Activated naive CD4-positive, alpha-beta T cell treated with anti-CD3 and anti-CD28 coated beads for 36 hours (primary cell): ENCODE measurements at regions of chr20 and their contacts with region 1.

Region 1: DNA sequence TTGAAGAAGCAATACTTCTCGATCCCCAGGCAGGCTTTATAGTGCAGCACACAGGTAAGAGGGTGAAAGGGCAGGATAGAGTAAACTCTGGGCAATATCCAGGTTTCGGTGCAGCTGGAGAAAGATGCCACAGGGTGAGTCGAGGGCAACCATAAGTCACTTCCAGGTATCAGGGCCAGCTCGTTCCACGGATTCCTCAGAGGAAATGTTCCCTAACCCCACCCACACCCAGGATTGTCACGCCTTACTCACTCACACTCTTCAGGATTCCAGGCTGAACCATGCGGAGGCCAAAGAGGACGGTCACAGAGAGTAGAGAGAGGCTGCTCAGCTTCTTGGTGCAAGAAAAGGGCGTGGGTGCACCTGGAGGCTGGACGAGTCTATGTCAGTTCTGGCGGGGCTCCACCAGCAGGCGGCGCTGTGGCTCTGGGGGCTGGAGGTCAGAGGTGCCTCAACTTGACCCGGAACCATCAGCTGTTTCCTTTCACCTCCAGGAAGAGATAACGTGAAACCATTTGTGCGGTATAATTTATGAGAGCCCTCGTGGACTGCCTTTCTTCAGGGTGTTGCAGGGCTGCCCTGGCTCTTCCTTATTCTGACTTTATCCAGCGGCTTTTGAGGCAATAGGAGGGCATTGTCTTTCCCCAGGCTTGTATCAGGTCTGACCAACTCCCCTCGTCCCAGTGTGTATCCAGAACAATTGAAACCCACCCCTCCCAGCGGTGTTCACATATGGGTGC is 14.5 kb upstream of the WFDC12 start:
- DNase-seq: peak; percentile 88
- H3K4me3 Mint-ChIP-seq: no peak overlapping the region
- H3K27ac Mint-ChIP-seq: no peak overlapping the region
- H3K4me1 Mint-ChIP-seq: no peaks in the 10 kb centered on the region
- H3K27me3 Mint-ChIP-seq: peaks cover 7% of the 10 kb centered on the region

Region 2: DNA sequence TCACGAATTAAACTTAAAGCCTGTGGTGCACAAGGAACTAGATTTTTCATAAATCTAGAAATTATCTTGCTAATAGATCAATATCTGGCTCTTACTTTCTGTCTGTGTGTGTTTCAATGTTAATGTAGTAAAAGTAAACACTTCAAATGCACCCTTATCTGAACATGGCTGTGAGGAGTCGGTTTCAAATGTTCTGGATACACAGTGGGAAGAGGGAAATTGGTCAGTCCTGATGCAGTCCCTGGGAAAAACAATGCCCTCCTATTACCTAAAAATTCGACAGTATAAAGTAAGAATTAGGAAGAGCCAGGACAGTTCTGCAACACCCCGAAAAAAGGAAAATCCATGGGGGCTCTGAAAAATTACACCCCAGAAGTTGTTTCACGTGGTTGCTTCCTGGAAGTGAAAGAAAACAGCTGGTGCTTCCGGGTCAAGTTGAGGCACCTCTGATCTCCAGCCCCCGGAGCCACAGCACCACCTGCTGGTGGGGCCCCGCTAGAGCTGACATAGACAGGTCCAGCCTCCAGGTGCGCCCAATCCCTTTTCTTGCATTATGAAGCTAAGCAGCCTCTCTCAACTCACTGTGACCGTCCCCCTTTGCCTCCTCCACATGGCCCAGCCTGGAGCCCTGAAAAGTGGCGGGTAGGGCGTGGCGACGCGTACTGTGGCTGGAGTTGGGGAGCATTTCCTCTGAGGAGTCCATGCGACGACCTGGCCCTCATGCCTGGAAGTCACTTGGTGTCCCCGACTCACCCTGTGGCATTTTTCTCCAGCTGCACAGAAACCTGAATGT is 90.7 kb after region 1 on chr20:
- CTCF ChIA-PET with region 1: interaction called, 5 read pairs
- intact Hi-C with region 1: loop called (anchors 10 kb)
- DNase-seq: peak; percentile 69
- H3K4me3 Mint-ChIP-seq: no peak overlapping the region
- H3K27ac Mint-ChIP-seq: no peak overlapping the region
- H3K4me1 Mint-ChIP-seq: no peaks in the 10 kb centered on the region
- H3K27me3 Mint-ChIP-seq: peaks cover 25% of the 10 kb centered on the region

Region 3: DNA sequence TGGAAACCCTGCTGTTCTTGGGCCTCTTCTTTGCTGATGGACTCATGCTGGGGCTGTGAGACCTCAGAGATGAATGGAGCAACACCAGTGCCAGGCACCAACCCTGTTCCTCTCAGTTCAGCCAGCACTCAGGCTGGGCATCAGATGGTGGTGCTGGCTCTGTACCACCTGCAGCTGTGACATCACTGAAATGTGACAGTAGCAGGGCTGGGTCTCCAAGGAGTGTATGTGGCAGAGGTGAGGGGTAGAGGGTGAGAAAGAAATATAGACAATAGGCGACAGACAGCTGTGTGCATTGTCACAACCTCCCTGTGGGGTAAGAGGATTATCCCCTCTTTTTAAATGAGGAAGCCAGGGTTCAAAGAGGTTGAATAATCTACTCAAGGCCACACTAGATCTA is 239.5 kb after region 1 on chr20 and contains the start of gene TP53TG5:
- CTCF ChIA-PET with region 1: no interaction called
- intact Hi-C with region 1: no loop called
- DNase-seq: no peak
- H3K4me3 Mint-ChIP-seq: no peak within 1 kb of the TSS
- H3K27ac Mint-ChIP-seq: no peak within 1 kb of the TSS
- H3K4me1 Mint-ChIP-seq: peaks cover 13% of the 10 kb centered on the region
- H3K27me3 Mint-ChIP-seq: no peaks in the 10 kb centered on the region
- total RNA-seq, gene TP53TG5: 0.59 to 1.0 TPM

Region 4: GRCh38 chr20:45905505-45906079 is 766.9 kb after region 1 on chr20:
- CTCF ChIA-PET with region 1: no interaction called
- intact Hi-C with region 1: no loop called
- DNase-seq: no peak
- H3K4me3 Mint-ChIP-seq: no peak overlapping the region
- H3K27ac Mint-ChIP-seq: no peak overlapping the region
- H3K4me1 Mint-ChIP-seq: peaks cover 2% of the 10 kb centered on the region
- H3K27me3 Mint-ChIP-seq: no peaks in the 10 kb centered on the region